ENCODE measurements at regions of chr16 and their contacts with region 1.

Region 1: DNA sequence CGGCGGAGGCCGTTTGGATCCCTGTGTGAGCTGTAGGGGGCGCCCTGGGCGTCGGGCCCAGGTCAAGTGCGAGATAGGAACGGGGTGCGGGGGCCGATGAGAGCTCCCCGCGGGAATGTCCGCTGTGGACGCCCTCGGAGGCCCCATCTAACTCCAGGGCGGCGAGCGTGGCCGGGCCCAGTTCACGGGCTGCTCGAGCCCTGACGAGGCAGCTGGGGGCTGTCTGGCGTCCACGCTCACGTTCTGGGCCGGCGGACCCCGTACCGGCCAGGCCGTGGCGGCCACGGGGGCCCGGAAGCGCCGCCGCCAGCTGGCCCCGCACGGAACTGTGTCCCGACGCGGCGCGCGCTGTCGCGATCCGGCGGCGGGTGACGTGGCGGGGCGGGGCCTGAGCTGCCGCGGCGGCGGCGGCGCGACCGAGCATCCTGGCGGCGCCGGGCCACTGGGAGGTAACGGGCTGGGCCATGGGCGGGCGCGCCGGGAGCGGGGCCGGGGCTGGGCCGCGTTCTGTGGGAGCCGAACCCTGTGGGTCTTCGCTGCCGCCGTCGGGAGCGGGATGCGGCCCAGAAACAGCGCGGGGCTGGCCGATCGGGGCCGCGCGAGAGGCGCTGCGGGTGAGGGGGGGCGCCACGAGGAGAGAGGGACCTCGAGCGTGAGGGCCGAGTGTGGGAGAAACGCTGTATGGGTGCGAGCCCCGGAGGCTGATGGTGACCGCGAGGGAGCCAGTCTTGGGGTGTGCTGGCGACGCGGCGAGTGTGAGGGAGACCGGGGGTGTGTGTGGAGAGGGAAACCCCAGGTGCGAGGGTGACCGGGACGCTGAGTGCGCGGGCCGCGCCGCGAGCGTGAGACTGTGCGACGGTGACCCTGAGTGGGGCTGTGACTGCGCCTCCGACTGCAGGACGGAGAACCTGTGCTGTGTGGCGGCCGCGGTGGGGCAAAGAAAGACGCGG is at the start of gene SLC7A6:
- DNase-seq: peak; percentile 92
- ATAC-seq: peak; percentile 71
- H3K4me3 Mint-ChIP-seq: peak within 1 kb of the TSS; percentile 90
- H3K27ac Mint-ChIP-seq: peak within 1 kb of the TSS; percentile 99
- H3K4me1 Mint-ChIP-seq: peaks cover 43% of the 10 kb centered on the region
- H3K27me3 Mint-ChIP-seq: no peaks in the 10 kb centered on the region
- CTCF ChIP-seq: peak; percentile 89
- total RNA-seq, gene SLC7A6: 73.8 to 76.9 TPM

Region 2: GRCh38 chr16:68116256-68116867 is 148.0 kb before region 1 on chr16:
- CTCF ChIA-PET with region 1: no interaction called
- POLR2A ChIA-PET with region 1: no interaction called
- intact Hi-C with region 1: no loop called
- DNase-seq: no peak
- ATAC-seq: peak; percentile 54
- H3K4me3 Mint-ChIP-seq: no peak overlapping the region
- H3K27ac Mint-ChIP-seq: peak overlapping the region; percentile 25
- H3K4me1 Mint-ChIP-seq: peaks cover 84% of the 10 kb centered on the region
- H3K27me3 Mint-ChIP-seq: no peaks in the 10 kb centered on the region
- CTCF ChIP-seq: peak; percentile 67

Region 3: GRCh38 chr16:68179196-68179795 is 85.1 kb before region 1 on chr16:
- CTCF ChIA-PET with region 1: no interaction called
- POLR2A ChIA-PET with region 1: no interaction called
- intact Hi-C with region 1: no loop called
- DNase-seq: no peak
- ATAC-seq: no peak
- H3K4me3 Mint-ChIP-seq: no peak overlapping the region
- H3K27ac Mint-ChIP-seq: peak overlapping the region; percentile 34
- H3K4me1 Mint-ChIP-seq: peaks cover 18% of the 10 kb centered on the region
- H3K27me3 Mint-ChIP-seq: no peaks in the 10 kb centered on the region
- CTCF ChIP-seq: no peak

Region 4: GRCh38 chr16:68237243-68238028 is 27.0 kb before region 1 on chr16:
- CTCF ChIA-PET with region 1: interaction called, 89 read pairs
- POLR2A ChIA-PET with region 1: interaction called, 11 read pairs
- intact Hi-C with region 1: no loop called
- DNase-seq: peak; percentile 96
- ATAC-seq: peak; percentile 81
- H3K4me3 Mint-ChIP-seq: peak overlapping the region; percentile 87
- H3K27ac Mint-ChIP-seq: peak overlapping the region; percentile 94
- H3K4me1 Mint-ChIP-seq: peaks cover 36% of the 10 kb centered on the region
- H3K27me3 Mint-ChIP-seq: no peaks in the 10 kb centered on the region
- CTCF ChIP-seq: no peak

Region 5: GRCh38 chr16:68251832-68252231 is 12.6 kb before region 1 on chr16:
- CTCF ChIA-PET with region 1: interaction called, 89 read pairs
- POLR2A ChIA-PET with region 1: interaction called, 22 read pairs
- intact Hi-C with region 1: no loop called
- DNase-seq: no peak
- ATAC-seq: no peak
- H3K4me3 Mint-ChIP-seq: no peak overlapping the region
- H3K27ac Mint-ChIP-seq: no peak overlapping the region
- H3K4me1 Mint-ChIP-seq: peaks cover under 1% of the 10 kb centered on the region
- H3K27me3 Mint-ChIP-seq: no peaks in the 10 kb centered on the region
- CTCF ChIP-seq: no peak

Region 6: GRCh38 chr16:68281368-68282063 is 17.1 kb after region 1 on chr16:
- CTCF ChIA-PET with region 1: interaction called, 260 read pairs
- POLR2A ChIA-PET with region 1: interaction called, 42 read pairs
- intact Hi-C with region 1: no loop called
- DNase-seq: no peak
- ATAC-seq: peak; percentile 14
- H3K4me3 Mint-ChIP-seq: no peak overlapping the region
- H3K27ac Mint-ChIP-seq: peak overlapping the region; percentile 95
- H3K4me1 Mint-ChIP-seq: peaks cover 69% of the 10 kb centered on the region
- H3K27me3 Mint-ChIP-seq: no peaks in the 10 kb centered on the region
- CTCF ChIP-seq: no peak

Region 7: GRCh38 chr16:68310761-68311511 is 46.5 kb after region 1 on chr16 and contains the starts of genes PRMT7 and SLC7A6OS:
- CTCF ChIA-PET with region 1: interaction called, 60 read pairs
- POLR2A ChIA-PET with region 1: interaction called, 28 read pairs
- intact Hi-C with region 1: loop called (anchors 5 kb)
- DNase-seq: peak; percentile 96
- ATAC-seq: peak; percentile 99
- H3K4me3 Mint-ChIP-seq: peak within 1 kb of the TSS; percentile 83
- H3K27ac Mint-ChIP-seq: peak within 1 kb of the TSS; percentile 89
- H3K4me1 Mint-ChIP-seq: peaks cover 46% of the 10 kb centered on the region
- H3K27me3 Mint-ChIP-seq: no peaks in the 10 kb centered on the region
- CTCF ChIP-seq: no peak
- total RNA-seq, gene PRMT7: 67.4 to 78.4 TPM
- total RNA-seq, gene SLC7A6OS: 20.2 to 23.1 TPM

Region 8: DNA sequence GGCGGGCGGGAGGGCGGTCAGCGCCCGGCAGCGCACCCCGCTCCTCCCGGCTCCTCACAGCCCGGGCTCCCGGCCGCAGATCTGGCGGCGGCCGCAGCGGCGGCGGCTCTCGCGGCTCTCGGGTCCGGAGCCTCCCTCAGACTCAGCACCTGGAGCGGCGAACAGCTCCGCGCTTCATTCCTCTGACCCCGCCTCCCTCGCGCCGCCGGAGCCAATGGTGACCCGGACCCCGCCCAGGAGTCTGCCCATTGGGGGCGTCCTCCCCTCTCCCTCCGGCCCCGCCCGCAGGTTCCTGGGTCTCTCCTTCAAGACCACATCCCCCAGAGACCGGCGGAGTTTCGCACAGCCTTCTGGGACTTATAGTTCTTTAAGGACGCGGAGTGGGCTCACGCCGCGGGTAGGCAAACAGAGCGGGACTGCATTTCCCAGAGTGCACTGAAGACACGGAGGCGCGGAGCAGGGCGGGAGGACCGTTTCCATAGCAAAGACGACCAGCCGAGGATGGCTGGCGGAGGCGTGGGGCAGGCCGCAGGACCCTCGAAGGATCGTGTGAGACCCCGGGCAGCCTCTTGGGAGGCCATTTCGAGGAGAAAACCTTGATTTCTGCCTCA is 184.1 kb after region 1 on chr16 and contains the start of gene SMPD3:
- CTCF ChIA-PET with region 1: no interaction called
- POLR2A ChIA-PET with region 1: no interaction called
- intact Hi-C with region 1: no loop called
- DNase-seq: peak; percentile 99
- ATAC-seq: peak; percentile 99
- H3K4me3 Mint-ChIP-seq: peak within 1 kb of the TSS; percentile 72
- H3K27ac Mint-ChIP-seq: no peak within 1 kb of the TSS
- H3K4me1 Mint-ChIP-seq: peaks cover 15% of the 10 kb centered on the region
- H3K27me3 Mint-ChIP-seq: peaks cover 28% of the 10 kb centered on the region
- CTCF ChIP-seq: no peak
- total RNA-seq, gene SMPD3: 0.16 to 0.63 TPM